Activated naive CD4-positive, alpha-beta T cell treated with anti-CD3 and anti-CD28 coated beads for 36 hours (primary cell): ENCODE measurements at regions of chr10 and their contacts with region 1.

Region 1: DNA sequence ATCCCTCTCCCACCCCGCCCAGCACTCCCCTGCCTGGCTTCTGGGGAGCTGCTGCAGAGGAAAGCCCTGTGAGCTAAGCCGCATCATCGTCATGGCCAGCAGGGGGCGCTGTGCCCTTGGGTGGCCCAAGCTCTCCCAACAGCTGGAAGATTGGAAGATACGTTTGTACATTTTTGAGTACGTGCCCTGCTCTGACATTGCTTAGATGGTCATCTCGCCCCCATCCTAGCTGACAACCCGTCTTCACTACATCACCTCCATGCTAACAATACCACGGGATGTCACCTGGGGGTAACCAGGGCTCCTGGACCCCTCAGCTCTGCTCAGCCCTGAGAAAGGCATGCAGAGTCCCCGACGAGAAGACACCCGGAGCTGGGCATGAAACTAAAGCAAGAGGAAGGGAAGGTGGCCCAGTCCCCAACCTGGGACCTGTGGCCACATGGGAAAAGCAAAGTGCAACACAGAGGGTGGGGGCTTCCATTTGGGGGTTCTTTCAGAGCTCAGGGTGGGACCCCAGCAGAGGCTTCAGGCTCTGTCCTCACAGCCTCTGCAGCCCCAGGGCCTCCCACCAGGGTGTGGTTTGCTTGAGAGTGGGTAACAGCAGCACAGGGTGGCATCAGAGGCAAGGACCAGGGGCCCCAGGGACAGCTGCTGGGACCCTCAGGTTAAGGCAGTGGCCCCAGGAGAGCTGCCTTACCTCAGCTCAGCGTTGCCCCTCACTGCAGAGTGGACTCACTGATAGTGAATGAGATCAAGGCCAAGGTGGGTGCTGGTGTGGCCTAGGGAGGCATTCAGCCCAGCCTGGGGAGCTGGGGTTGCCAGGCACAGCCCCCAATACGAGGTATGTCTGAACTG is 136.7 kb downstream of the PTPN20 start:
- DNase-seq: peak; percentile 87
- H3K4me3 Mint-ChIP-seq: no peak overlapping the region
- H3K27ac Mint-ChIP-seq: no peak overlapping the region
- H3K4me1 Mint-ChIP-seq: peaks cover 16% of the 10 kb centered on the region
- H3K27me3 Mint-ChIP-seq: no peaks in the 10 kb centered on the region

Region 2: DNA sequence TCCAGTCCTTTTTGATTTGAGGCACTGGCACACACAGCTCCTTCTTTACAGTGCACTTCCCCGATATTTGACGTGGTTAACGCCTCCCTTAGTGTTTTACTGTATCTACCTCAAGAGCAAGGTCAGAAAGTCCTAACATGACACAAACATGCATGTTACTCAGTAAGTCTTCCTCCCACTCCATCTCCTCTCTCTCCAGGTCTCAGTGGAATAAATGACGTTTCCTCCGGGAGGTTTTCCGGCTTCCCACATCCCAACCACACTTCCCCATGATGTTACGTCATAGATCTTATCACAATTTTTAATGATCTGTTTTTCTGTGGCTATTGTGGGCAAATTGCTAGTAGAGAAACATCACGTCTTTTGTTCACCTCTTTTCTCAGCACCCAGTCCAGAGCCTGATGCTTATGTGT is 29.1 kb after region 1 on chr10:
- CTCF ChIA-PET with region 1: interaction called, 13 read pairs
- intact Hi-C with region 1: no loop called
- DNase-seq: no peak
- H3K4me3 Mint-ChIP-seq: no peak overlapping the region
- H3K27ac Mint-ChIP-seq: no peak overlapping the region
- H3K4me1 Mint-ChIP-seq: peaks cover 14% of the 10 kb centered on the region
- H3K27me3 Mint-ChIP-seq: no peaks in the 10 kb centered on the region

Region 3: GRCh38 chr10:47165711-47166524 is 118.0 kb after region 1 on chr10:
- CTCF ChIA-PET with region 1: interaction called, 9 read pairs
- intact Hi-C with region 1: loop called (anchors 1 kb)
- DNase-seq: peak; percentile 62
- H3K4me3 Mint-ChIP-seq: peak overlapping the region; percentile 66
- H3K27ac Mint-ChIP-seq: peak overlapping the region; percentile 87
- H3K4me1 Mint-ChIP-seq: peaks cover 24% of the 10 kb centered on the region
- H3K27me3 Mint-ChIP-seq: no peaks in the 10 kb centered on the region

Region 4: GRCh38 chr10:47306387-47307210 is 258.7 kb after region 1 on chr10:
- CTCF ChIA-PET with region 1: interaction called, 185 read pairs
- intact Hi-C with region 1: no loop called
- DNase-seq: no peak
- H3K4me3 Mint-ChIP-seq: no peak overlapping the region
- H3K27ac Mint-ChIP-seq: no peak overlapping the region
- H3K4me1 Mint-ChIP-seq: peaks cover 33% of the 10 kb centered on the region
- H3K27me3 Mint-ChIP-seq: no peaks in the 10 kb centered on the region

Region 5: DNA sequence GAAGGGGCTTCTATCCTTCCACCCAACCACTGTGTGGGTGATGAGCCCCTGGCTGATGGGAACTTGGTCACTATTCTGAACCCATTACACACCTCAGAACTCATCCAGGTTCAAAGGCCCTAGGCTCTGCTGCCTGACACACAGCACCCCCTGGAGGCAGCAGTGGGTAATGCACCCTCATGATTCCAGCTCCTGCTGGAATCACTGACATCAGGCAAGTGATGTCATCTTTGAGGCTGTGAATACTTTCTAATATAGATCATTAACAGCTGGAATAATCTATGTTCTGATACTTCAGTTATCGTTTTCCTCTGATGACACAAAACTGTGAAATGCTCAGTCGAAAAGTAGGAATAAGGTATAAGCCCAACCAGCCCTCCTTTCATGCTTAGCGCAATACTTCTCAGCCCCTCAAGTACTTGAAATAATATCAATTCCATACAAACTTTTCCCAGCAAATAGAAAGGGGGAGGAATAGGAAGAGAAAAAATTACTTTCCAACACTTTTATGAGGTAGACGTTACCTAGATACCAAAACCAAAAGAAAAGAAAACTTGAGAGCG is 292.8 kb after region 1 on chr10:
- CTCF ChIA-PET with region 1: interaction called, 12 read pairs
- intact Hi-C with region 1: loop called (anchors 1 kb)
- DNase-seq: peak; percentile 78
- H3K4me3 Mint-ChIP-seq: no peak overlapping the region
- H3K27ac Mint-ChIP-seq: no peak overlapping the region
- H3K4me1 Mint-ChIP-seq: no peaks in the 10 kb centered on the region
- H3K27me3 Mint-ChIP-seq: peaks cover 4% of the 10 kb centered on the region